H1 (cell line): ENCODE measurements at regions of chr7 and their contacts with region 1.

Region 1: GRCh38 chr7:14995774-14996173 is 93.2 kb upstream of the DGKB start:
- DNase-seq: no peak
- H3K4me3 ChIP-seq: no peak overlapping the region
- H3K27ac ChIP-seq: no peak overlapping the region
- H3K4me1 ChIP-seq: no peaks in the 10 kb centered on the region
- H3K27me3 ChIP-seq: no peaks in the 10 kb centered on the region
- CTCF ChIP-seq: no peak
- EP300 ChIP-seq: no peak
- POLR2A ChIP-seq: no peak
- RAD21 ChIP-seq: no peak

Region 2: GRCh38 chr7:14954035-14954434 is 41.7 kb before region 1 on chr7:
- CTCF ChIA-PET with region 1: no interaction called
- POLR2A ChIA-PET with region 1: no interaction called
- DNase-seq: no peak
- H3K4me3 ChIP-seq: no peak overlapping the region
- H3K27ac ChIP-seq: no peak overlapping the region
- H3K4me1 ChIP-seq: peaks cover 0 to 2% (median 0%) of the 10 kb centered on the region in 4 experiments; a peak in 2 of 7 replicates
- H3K27me3 ChIP-seq: no peaks in the 10 kb centered on the region
- CTCF ChIP-seq: no peak
- EP300 ChIP-seq: no peak
- POLR2A ChIP-seq: no peak
- RAD21 ChIP-seq: no peak

Region 3: DNA sequence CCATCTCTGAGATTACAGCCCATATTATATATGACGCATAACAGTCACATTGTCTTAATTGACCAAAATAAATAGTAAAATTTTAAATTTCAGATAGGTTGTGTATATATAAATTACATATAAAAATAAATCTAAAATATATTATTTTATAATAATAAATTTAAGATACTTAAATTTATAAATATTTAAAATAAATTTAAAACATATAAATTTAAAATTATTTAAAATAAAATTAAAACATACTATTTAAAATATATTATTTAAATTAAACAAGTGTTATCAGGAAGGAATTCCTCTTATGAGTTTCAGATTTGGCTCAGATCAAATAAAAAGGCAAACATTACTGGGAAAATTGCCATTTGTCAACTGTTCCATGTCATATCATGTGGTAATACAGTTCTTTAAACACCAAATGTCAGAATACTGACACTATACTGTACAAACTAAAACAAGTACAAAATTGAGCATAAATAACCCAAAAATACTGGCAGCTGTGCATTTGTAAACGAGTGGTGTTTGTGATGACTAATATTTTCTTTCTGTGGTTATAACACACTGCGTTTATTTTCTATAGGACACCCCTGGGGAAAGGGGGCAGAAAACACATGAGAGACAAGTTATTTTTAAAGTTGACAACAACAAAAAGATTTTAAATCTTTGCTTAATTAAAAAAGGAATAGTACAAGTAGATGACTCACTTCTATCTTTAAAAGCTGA is 21.9 kb before region 1 on chr7:
- CTCF ChIA-PET with region 1: no interaction called
- POLR2A ChIA-PET with region 1: no interaction called
- DNase-seq: no peak
- H3K4me3 ChIP-seq: no peak overlapping the region
- H3K27ac ChIP-seq: no peak overlapping the region
- H3K4me1 ChIP-seq: no peaks in the 10 kb centered on the region
- H3K27me3 ChIP-seq: peaks cover 0 to 1% (median 0%) of the 10 kb centered on the region in 4 experiments; a peak in 1 of 7 replicates
- CTCF ChIP-seq: no peak
- EP300 ChIP-seq: no peak
- POLR2A ChIP-seq: no peak
- RAD21 ChIP-seq: no peak

Region 4: DNA sequence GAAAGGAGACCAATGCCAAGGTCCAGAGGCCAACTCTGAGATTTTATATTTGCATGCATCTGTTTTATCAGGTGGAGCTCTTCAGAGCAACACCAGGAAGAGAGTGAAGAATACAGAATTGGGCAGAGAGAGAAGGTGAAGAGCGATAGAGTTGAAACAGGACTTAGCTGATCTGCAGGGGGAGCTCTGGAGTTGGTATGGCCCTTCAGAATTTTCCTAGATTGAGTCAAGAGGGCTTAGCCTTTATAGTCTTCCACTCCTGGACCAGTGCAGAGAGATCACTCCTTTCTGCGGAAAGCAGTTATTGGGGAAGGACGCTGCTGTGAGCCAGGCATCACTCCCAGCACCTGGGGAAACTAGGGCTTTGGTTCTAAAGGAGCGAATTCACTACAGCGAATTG is 11.7 kb after region 1 on chr7:
- CTCF ChIA-PET with region 1: interaction called, 11 read pairs
- POLR2A ChIA-PET with region 1: no interaction called
- DNase-seq: peak; percentile 2 to 54
- H3K4me3 ChIP-seq: no peak overlapping the region
- H3K27ac ChIP-seq: no peak overlapping the region
- H3K4me1 ChIP-seq: peaks cover 0 to 9% (median 3%) of the 10 kb centered on the region in 4 experiments; a peak in 2 of 7 replicates
- H3K27me3 ChIP-seq: no peaks in the 10 kb centered on the region
- CTCF ChIP-seq: peak; percentile 4 to 70 (median 54)
- EP300 ChIP-seq: no peak
- POLR2A ChIP-seq: no peak
- RAD21 ChIP-seq: peak; percentile 63 to 67

Region 5: GRCh38 chr7:15033039-15033438 is 37.3 kb after region 1 on chr7:
- CTCF ChIA-PET with region 1: no interaction called
- POLR2A ChIA-PET with region 1: no interaction called
- DNase-seq: no peak
- H3K4me3 ChIP-seq: no peak overlapping the region
- H3K27ac ChIP-seq: no peak overlapping the region
- H3K4me1 ChIP-seq: no peaks in the 10 kb centered on the region
- H3K27me3 ChIP-seq: no peaks in the 10 kb centered on the region
- CTCF ChIP-seq: no peak
- EP300 ChIP-seq: no peak
- POLR2A ChIP-seq: no peak
- RAD21 ChIP-seq: no peak